ENCODE measurements at regions of chr10 and their contacts with region 1.

Region 1: GRCh38 chr10:62610649-62611229 is 193.8 kb upstream of the ADO start:
- DNase-seq: peak; percentile 85
- H3K4me3 Mint-ChIP-seq: no peak overlapping the region
- H3K27ac Mint-ChIP-seq: no peak overlapping the region
- H3K4me1 Mint-ChIP-seq: peaks cover 37% of the 10 kb centered on the region
- H3K27me3 Mint-ChIP-seq: peaks cover 5% of the 10 kb centered on the region

Region 2: GRCh38 chr10:61621605-61622060 is 989.1 kb before region 1 on chr10:
- CTCF ChIA-PET with region 1: no interaction called
- POLR2A ChIA-PET with region 1: no interaction called
- intact Hi-C with region 1: no loop called
- DNase-seq: no peak
- H3K4me3 Mint-ChIP-seq: no peak overlapping the region
- H3K27ac Mint-ChIP-seq: no peak overlapping the region
- H3K4me1 Mint-ChIP-seq: no peaks in the 10 kb centered on the region
- H3K27me3 Mint-ChIP-seq: peaks cover 2% of the 10 kb centered on the region

Region 3: GRCh38 chr10:62528441-62528840 is 82.3 kb before region 1 on chr10:
- CTCF ChIA-PET with region 1: no interaction called
- POLR2A ChIA-PET with region 1: no interaction called
- intact Hi-C with region 1: no loop called
- DNase-seq: no peak
- H3K4me3 Mint-ChIP-seq: no peak overlapping the region
- H3K27ac Mint-ChIP-seq: peak overlapping the region; percentile 15
- H3K4me1 Mint-ChIP-seq: peaks cover 33% of the 10 kb centered on the region
- H3K27me3 Mint-ChIP-seq: peaks cover 11% of the 10 kb centered on the region

Region 4: GRCh38 chr10:62655337-62655994 is 44.7 kb after region 1 on chr10:
- CTCF ChIA-PET with region 1: interaction called, 3 read pairs
- POLR2A ChIA-PET with region 1: no interaction called
- intact Hi-C with region 1: loop called (anchors 1 kb)
- DNase-seq: peak; percentile 72
- H3K4me3 Mint-ChIP-seq: no peak overlapping the region
- H3K27ac Mint-ChIP-seq: no peak overlapping the region
- H3K4me1 Mint-ChIP-seq: peaks cover 28% of the 10 kb centered on the region
- H3K27me3 Mint-ChIP-seq: no peaks in the 10 kb centered on the region

Region 5: DNA sequence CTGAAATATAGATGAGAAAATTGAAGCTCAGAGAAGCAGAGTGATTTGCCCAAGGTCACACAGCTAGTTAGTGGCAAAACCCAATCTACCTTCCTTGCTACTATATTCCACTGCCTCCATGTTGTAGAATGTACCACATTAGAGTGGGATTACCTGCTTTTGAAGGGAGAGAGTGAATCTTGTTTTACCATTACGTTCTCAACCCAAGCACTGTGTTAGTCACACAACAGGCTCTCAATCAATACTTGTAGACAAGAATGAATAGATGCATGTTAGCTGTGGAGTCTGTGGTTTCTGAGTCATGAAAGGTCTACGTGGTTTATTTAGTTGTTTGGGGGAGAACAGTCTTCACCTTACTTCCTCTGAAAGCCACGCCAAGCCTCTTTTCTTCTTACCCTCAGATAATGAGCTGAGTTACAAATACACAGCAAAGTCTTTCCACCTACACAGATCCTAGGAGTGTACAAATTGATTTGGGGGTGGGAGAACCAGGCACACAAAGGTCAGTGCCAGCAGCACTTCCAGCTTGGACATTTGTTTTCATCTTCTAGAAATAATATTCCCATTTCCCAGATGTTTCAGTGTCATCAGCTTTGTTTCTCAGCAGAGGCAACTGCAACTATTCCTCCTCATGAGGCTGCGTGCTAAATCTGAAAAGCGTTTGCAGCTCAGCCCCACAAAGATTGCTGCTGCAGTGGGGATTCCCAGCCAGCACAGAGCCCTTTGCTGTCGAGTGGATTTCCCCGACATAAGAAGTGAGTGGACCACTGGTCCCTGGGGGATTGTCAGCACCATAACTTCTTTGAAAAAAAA is 122.3 kb after region 1 on chr10:
- CTCF ChIA-PET with region 1: interaction called, 13 read pairs
- POLR2A ChIA-PET with region 1: no interaction called
- intact Hi-C with region 1: loop called (anchors 1 kb)
- DNase-seq: peak; percentile 71
- H3K4me3 Mint-ChIP-seq: no peak overlapping the region
- H3K27ac Mint-ChIP-seq: no peak overlapping the region
- H3K4me1 Mint-ChIP-seq: peaks cover 19% of the 10 kb centered on the region
- H3K27me3 Mint-ChIP-seq: peaks cover 3% of the 10 kb centered on the region

Region 6: GRCh38 chr10:62811159-62811875 is 200.6 kb after region 1 on chr10:
- CTCF ChIA-PET with region 1: interaction called, 139 read pairs
- POLR2A ChIA-PET with region 1: interaction called, 3 read pairs
- intact Hi-C with region 1: loop called (anchors 1 kb)
- DNase-seq: peak; percentile 94
- H3K4me3 Mint-ChIP-seq: peak overlapping the region; percentile 88
- H3K27ac Mint-ChIP-seq: peak overlapping the region; percentile 88
- H3K4me1 Mint-ChIP-seq: peaks cover 79% of the 10 kb centered on the region
- H3K27me3 Mint-ChIP-seq: no peaks in the 10 kb centered on the region

Region 7: GRCh38 chr10:62992145-62992721 is 381.5 kb after region 1 on chr10:
- CTCF ChIA-PET with region 1: interaction called, 5 read pairs
- POLR2A ChIA-PET with region 1: interaction called, 3 read pairs
- intact Hi-C with region 1: loop called (anchors 5 kb)
- DNase-seq: peak; percentile 20
- H3K4me3 Mint-ChIP-seq: peak overlapping the region; percentile 24
- H3K27ac Mint-ChIP-seq: peak overlapping the region; percentile 84
- H3K4me1 Mint-ChIP-seq: peaks cover 54% of the 10 kb centered on the region
- H3K27me3 Mint-ChIP-seq: peaks cover 7% of the 10 kb centered on the region